Heart right ventricle (tissue), 16 donors: ENCODE measurements at regions of chr18 and their contacts with region 1.

Region 1: DNA sequence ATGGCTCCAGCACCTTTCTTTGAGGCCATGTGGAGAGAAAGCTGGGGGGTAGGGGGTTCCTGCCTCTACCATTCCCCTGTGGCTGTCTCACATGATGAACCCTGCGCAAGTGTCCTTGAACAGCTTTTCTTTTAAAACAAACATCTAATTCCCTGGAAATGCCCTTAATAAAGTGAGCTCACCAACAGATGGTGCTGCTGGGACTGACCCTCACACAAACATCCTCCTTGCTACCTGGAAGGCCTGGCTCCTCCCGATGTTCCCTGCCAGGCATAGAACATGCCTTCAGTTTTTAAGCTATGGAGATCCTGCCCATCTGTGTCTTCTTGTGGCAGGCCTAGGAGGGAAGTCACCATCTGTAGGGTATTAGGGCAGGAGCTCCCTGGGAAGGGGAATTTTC is 60.7 kb upstream of the GATA6 start:
- DNase-seq: no peak
- ATAC-seq: no peak
- H3K4me3 ChIP-seq: no peak overlapping the region
- H3K27ac ChIP-seq: no peak overlapping the region
- H3K4me1 ChIP-seq: peaks cover 0 to 12% (median 2%) of the 10 kb centered on the region in 9 donors
- H3K27me3 ChIP-seq: no peaks in the 10 kb centered on the region
- CTCF ChIP-seq: peak in 3 of 9 donors; percentile 6 to 26 (median 18)

Region 2: GRCh38 chr18:22152134-22152533 is 43.5 kb after region 1 on chr18:
- intact Hi-C with region 1: loop called in 1 of 10 experiments (anchors 10 kb)
- DNase-seq: no peak
- ATAC-seq: peak in 1 of 8 donors; percentile 31
- H3K4me3 ChIP-seq: no peak overlapping the region
- H3K27ac ChIP-seq: no peak overlapping the region
- H3K4me1 ChIP-seq: no peaks in the 10 kb centered on the region
- H3K27me3 ChIP-seq: no peaks in the 10 kb centered on the region
- CTCF ChIP-seq: no peak

Region 3: DNA sequence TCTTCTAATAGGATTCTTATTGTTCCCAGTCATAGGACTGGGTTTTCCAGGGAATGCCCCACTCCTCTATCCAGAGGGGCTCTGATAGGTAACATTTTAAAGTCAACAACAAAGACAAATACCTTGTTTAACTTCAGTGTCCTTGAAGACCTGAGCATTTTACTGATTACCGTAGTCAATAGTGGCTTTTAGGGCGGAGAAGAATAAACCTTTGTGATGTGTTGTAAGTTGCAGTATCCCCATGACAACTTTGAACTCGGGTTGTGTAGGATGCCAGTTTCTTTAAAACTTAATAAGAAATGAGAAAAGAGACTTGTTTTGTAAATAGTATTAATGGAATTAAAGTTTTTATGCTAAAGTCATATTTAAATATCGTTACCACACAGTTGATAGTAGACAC is 66.7 kb after region 1 on chr18:
- intact Hi-C with region 1: no loop called
- DNase-seq: no peak
- ATAC-seq: no peak
- H3K4me3 ChIP-seq: peak overlapping the region; percentile 23 to 97 (median 85)
- H3K27ac ChIP-seq: peak overlapping the region; percentile 80 to 100 (median 97)
- H3K4me1 ChIP-seq: peaks cover 2 to 41% (median 12%) of the 10 kb centered on the region in 9 donors
- H3K27me3 ChIP-seq: peaks cover 0 to 93% (median 0%) of the 10 kb centered on the region in 7 donors
- CTCF ChIP-seq: no peak

Region 4: GRCh38 chr18:22609642-22610041 is 501.0 kb after region 1 on chr18:
- intact Hi-C with region 1: no loop called
- DNase-seq: peak; percentile 66 to 86
- ATAC-seq: peak; percentile 47 to 84 (median 63)
- H3K4me3 ChIP-seq: no peak overlapping the region
- H3K27ac ChIP-seq: peak overlapping the region in 9 of 10 donors; percentile 1 to 79 (median 57)
- H3K4me1 ChIP-seq: peaks cover 0 to 60% (median 29%) of the 10 kb centered on the region in 9 donors
- H3K27me3 ChIP-seq: no peaks in the 10 kb centered on the region
- CTCF ChIP-seq: no peak